Activated naive CD4-positive, alpha-beta T cell treated with anti-CD3 and anti-CD28 coated beads for 36 hours (primary cell): ENCODE measurements at regions of chr10 and their contacts with region 1.

Region 1: DNA sequence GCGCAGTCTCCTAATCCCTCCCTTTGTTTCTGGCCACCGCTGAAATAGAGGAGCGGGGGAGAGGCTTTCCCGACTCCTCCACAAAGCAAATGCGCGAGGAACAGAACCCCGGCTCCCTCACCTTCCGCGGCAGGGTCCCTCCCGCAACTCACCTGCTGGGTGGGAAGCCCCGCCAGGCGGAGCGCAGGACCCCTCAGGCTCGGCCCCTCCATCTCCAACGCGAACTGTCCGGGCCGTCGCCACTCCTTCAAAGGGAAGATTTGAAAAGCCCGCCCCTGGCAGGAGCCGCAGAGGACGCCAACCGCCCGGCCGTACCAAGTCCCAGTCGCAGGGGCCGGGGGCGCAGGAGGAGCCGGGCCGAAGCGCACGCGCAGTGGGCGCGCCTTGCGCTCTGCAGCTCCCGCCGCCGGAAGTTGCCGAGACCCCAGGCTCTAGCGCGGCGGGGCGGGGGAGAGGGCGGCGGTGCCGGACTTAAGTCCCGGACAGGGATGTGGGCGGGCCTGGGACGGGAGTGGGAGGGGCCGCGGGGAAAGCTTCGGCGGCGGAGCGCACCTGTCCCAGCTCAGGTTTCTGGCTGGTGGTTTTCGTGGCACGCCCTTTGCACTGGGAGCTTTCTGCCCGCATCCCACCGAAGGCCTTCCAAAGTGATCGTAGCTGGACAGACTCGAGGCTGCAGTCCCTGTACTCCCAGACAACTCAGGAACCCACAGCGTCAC is at the start of gene RTKN2:
- DNase-seq: peak; percentile 78
- H3K4me3 Mint-ChIP-seq: peak within 1 kb of the TSS; percentile 72
- H3K27ac Mint-ChIP-seq: peak within 1 kb of the TSS; percentile 28
- H3K4me1 Mint-ChIP-seq: peaks cover 23% of the 10 kb centered on the region
- H3K27me3 Mint-ChIP-seq: peaks cover 13% of the 10 kb centered on the region
- total RNA-seq, gene RTKN2: 4.7 to 5.4 TPM

Region 2: DNA sequence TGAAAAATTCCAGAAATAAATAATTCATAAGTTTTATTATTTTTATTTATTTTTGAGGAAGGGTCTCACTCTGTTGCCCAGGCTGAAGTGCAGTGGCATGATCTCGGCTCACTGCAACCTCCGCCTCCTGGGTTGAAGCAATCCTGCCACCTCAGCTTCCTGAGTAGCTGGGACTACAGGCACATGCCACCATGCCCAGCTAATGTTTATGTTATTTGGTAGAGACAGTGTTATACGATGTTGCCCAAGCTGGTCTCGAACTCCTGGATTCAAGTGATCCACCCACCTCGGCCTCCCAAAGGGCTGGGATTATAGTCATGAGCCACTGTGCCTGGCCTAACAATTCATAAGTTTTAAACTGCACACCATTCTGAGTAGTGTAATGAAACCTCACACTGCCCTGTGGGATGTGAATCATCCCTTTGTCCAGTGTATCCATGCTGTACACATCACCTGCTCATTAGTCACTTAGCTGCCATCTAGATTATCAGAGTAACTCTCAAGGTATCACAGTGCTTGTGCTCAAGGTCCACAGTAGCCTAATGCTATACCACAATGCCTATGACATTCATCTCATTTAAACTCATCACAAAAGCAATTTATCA is 17.9 kb before region 1 on chr10:
- CTCF ChIA-PET with region 1: interaction called, 10 read pairs
- intact Hi-C with region 1: loop called (anchors 1 kb)
- DNase-seq: peak; percentile 8
- H3K4me3 Mint-ChIP-seq: no peak overlapping the region
- H3K27ac Mint-ChIP-seq: no peak overlapping the region
- H3K4me1 Mint-ChIP-seq: peaks cover 45% of the 10 kb centered on the region
- H3K27me3 Mint-ChIP-seq: no peaks in the 10 kb centered on the region

Region 3: DNA sequence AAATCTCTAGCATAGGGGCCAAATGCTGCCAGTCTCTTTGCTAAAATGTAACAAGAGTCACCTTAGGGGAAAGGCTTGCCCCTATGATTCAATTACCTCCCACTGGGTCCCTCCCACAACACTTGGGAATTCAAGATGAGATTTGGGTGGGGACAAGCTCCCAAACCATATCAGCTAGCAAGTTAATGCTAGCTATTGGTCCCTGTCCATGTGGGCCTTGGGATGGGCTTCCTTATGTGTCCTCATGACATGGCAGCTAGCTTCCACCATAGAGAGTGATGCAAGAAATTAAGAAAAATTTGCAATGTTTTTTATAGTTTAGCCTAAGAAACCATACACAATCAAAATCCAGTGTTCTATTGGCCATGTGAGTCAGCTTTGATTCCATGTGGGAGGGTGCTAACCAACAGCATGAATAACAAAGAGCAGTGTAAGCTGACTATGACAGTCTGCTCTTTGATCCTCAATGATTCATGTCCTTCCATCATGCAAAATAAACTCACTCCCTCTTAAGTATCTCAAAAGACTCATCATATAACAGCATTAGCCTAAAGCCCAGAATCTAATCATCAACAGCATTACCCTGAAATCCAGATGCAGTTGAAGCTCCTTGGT is 83.9 kb after region 1 on chr10:
- CTCF ChIA-PET with region 1: no interaction called
- intact Hi-C with region 1: loop called (anchors 5 kb)
- DNase-seq: peak; percentile 46
- H3K4me3 Mint-ChIP-seq: no peak overlapping the region
- H3K27ac Mint-ChIP-seq: no peak overlapping the region
- H3K4me1 Mint-ChIP-seq: peaks cover 19% of the 10 kb centered on the region
- H3K27me3 Mint-ChIP-seq: peaks cover 6% of the 10 kb centered on the region